Activated CD8-positive, alpha-beta T cell treated with anti-CD3 and anti-CD28 coated beads, Interleukin-2, amount 10 ng/mL, durations not matched to agents 7 days and 5 days (primary cell): ENCODE measurements at regions of chr14 and their contacts with region 1.

Region 1: DNA sequence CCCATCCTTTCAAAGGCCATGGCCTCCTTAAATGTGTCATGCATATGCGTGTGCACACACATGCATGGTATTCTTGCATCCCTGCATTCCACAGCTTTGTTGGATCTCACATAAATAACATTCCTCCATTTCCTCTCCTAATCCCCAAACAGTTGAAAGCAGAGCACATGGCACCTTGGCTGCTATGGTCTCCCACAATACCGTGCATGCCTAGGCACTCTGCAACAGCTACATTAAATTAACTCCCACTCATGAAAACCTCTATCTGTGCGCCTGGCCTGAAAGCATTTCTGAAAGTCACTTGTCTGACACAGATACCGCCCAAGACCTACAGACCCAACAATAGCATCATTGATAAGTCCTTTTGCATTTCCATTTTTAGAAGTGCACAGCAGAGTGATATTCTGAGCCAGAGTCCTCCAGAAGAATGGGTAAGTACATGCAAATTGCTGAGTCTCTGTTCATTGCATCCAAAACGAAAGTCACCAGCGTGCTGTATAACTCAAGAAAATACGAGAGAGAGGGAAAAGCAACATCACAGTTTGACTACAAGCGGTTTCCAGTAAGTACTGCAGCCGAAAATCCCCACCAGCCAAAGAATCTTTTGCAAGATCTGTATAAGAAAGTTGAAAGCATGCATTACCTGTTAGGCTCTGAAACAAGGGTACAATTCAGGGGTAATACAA is 436 bp downstream of the ASB2 start:
- DNase-seq: no peak
- ATAC-seq: no peak
- H3K4me3 Mint-ChIP-seq: peak overlapping the region; percentile 48
- H3K27ac Mint-ChIP-seq: peak overlapping the region; percentile 82
- H3K4me1 Mint-ChIP-seq: peaks cover 94% of the 10 kb centered on the region
- H3K27me3 Mint-ChIP-seq: no peaks in the 10 kb centered on the region

Region 2: DNA sequence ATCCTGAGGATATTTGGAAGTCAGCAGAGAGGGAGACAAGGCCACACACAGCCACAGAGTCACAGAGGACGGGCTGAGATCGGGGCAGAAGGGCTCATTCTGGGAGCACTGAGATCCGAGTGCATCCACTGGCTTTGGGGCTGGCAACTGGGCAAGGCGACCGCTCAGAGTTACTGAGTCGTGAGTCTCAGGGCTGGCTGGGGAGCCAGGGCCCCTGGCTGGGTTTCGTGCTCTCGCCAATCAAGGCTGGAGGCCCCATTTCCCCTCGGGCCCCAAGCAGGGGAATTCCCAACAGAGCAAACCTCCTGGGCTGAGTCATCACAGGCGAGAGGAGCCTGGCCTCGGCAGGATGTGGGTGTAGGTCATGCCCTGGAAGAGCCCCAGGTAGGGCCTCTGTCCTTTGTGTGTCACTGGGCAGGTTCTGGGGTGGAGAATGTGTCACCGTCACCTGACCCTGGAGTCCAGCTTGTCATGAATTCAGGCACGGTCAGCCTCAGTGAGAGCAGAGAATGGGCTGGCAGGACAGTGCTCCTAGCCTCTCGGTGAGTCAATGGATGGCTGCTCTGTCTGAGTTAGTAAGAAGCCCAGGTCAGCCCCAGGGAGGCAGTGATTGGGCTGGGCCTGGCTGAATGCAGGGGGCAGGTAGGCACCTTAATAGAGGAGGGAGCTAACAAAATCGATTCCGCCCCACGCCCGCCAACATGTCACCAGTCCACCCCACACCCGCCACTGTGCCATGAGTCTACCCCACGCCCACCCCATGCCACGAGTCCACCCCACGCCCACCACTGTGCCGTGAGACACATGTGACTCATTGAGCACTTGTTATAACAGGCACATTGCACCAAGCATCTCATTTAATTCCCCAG is 16.5 kb before region 1 on chr14:
- CTCF ChIA-PET with region 1: interaction called, 49 read pairs
- POLR2A ChIA-PET with region 1: interaction called, 303 read pairs
- DNase-seq: peak; percentile 95
- ATAC-seq: peak; percentile 76
- H3K4me3 Mint-ChIP-seq: peak overlapping the region; percentile 71
- H3K27ac Mint-ChIP-seq: peak overlapping the region; percentile 98
- H3K4me1 Mint-ChIP-seq: peaks cover 97% of the 10 kb centered on the region
- H3K27me3 Mint-ChIP-seq: no peaks in the 10 kb centered on the region